PC-9 (cell line): ENCODE measurements at regions of chr11 and their contacts with region 1.

Region 1: GRCh38 chr11:5123802-5124521 is 14.2 kb downstream of the OR52A5 start:
- DNase-seq: peak in 1 of 2 experiments; percentile 28
- H3K4me3 ChIP-seq: no peak overlapping the region
- H3K27ac ChIP-seq: no peak overlapping the region
- H3K4me1 ChIP-seq: no peaks in the 10 kb centered on the region
- H3K27me3 ChIP-seq: no peaks in the 10 kb centered on the region
- CTCF ChIP-seq: peak; percentile 78

Region 2: GRCh38 chr11:5291207-5291838 is 167.4 kb after region 1 on chr11:
- CTCF ChIA-PET with region 1: no interaction called
- POLR2A ChIA-PET with region 1: no interaction called
- intact Hi-C with region 1: loop called (anchors 2 kb)
- DNase-seq: no peak
- H3K4me3 ChIP-seq: no peak overlapping the region
- H3K27ac ChIP-seq: no peak overlapping the region
- H3K4me1 ChIP-seq: no peaks in the 10 kb centered on the region
- H3K27me3 ChIP-seq: no peaks in the 10 kb centered on the region
- CTCF ChIP-seq: peak; percentile 58

Region 3: DNA sequence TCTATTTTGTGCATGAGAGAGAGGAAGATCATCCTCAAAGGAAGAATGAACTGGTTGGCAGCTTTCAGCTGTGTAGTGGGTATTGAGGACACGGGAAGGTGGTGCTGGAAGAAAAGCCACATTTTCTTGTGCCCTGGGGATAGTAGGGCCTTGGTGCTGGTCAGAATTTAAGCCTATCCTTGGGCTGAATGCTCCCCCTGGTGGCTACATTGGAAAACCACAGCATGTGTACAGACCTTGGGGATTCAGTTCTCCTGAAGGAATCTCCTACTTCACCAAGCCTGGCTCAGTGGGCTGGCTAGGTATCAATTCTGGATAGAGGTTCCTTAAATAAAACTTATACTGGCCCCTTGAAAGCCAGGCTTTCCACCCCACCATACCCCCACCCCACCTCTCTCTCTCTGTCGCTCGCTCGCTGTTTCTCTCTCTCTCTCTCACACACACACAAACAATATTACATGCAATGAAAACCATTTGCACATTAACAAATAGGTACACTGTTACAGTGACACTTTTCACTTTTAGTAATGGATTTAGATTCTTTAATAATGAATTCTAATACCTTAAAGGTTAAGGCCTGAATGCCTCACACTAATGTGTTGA is 256.9 kb after region 1 on chr11:
- CTCF ChIA-PET with region 1: no interaction called
- POLR2A ChIA-PET with region 1: no interaction called
- intact Hi-C with region 1: loop called (anchors 2 kb)
- DNase-seq: peak in 1 of 2 experiments; percentile 23
- H3K4me3 ChIP-seq: no peak overlapping the region
- H3K27ac ChIP-seq: no peak overlapping the region
- H3K4me1 ChIP-seq: no peaks in the 10 kb centered on the region
- H3K27me3 ChIP-seq: no peaks in the 10 kb centered on the region
- CTCF ChIP-seq: peak; percentile 75

Region 4: DNA sequence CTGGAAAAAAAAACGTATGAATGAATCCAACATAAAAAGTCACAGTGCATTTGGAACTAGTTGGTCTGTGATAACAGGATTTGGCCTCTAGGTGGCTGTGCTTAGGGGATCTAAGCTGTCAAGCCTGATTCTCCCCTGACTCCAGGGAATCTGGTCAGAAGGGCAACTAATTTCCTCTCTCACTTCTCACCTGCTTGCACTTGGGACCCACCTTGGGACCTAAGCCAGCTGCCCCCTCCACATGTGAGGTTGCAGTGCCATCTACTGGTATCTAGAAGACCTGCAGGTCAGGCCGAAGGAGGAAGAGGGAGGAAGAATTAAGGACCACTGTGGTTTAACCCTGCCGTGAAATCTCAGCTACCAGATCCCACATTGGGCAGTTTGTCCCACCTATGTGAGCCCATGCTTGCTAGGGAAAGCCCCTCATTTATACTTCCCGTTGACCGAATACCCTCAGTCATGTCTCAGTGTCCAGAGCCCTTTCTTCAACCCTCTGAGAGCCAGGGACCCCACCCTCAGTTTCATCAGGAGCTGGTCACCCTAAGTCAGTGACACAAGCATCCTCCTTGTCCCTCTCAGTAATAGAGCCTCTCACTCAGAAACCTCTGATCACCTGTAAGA is 1229.5 kb after region 1 on chr11:
- CTCF ChIA-PET with region 1: no interaction called
- POLR2A ChIA-PET with region 1: no interaction called
- intact Hi-C with region 1: loop called (anchors 10 kb)
- DNase-seq: peak; percentile 59 to 67
- H3K4me3 ChIP-seq: no peak overlapping the region
- H3K27ac ChIP-seq: no peak overlapping the region
- H3K4me1 ChIP-seq: no peaks in the 10 kb centered on the region
- H3K27me3 ChIP-seq: no peaks in the 10 kb centered on the region
- CTCF ChIP-seq: peak; percentile 83